Cardiac septum (tissue), 1 donor: ENCODE measurements at regions of chr11 and their contacts with region 1.

Region 1: DNA sequence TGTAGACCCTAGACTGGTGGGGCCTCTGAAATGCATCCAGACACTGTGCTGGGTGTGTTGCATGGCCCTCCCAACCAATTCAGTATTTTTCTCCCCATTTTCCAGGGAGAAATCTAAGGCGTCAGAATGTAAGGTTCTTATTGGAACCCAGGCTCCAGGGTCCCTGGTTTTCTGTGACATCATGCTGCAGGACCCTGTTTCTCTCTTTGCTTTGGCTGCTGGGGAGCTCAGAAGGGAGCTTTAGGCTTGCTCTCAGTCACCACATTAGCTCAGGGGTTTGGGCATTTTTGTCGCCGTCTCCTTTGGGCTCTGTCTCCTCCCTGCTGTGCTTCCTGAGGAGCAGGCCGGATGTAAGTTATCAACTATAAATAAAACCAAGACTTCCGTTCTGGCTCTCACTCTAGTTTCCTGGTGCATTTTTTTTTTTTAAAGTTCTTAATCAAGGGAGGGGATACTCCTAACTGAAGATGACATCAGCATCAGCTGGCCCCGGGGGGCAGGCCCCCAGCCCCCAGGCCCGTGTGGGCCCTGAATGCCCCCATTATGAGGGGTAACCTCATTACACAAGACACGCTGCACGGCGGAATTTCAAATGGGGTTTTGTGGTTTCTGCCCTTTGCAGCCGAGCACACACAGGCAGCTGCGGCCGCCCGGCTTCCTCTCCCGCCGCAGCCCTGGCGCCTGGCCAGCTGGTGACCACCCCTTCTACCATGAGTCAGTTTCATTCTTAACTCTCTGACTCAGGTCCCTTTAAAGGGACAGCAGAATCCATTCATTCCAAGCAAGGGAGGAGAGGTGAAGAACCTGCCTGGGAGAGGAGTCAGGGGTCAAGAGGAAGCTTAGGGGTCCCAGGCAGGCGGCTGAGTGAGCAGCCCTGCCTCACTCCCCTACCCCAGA is 3.2 kb downstream of the MYEOV start:
- DNase-seq: peak; percentile 95

Region 2: GRCh38 chr11:69101115-69101791 is 195.9 kb before region 1 on chr11:
- intact Hi-C with region 1: loop called (anchors 5 kb)
- DNase-seq: no peak

Region 3: GRCh38 chr11:69417146-69418085 is 120.3 kb after region 1 on chr11:
- intact Hi-C with region 1: loop called (anchors 2 kb)
- DNase-seq: no peak

Region 4: GRCh38 chr11:69449320-69450063 is 152.4 kb after region 1 on chr11:
- intact Hi-C with region 1: loop called (anchors 1 kb)
- DNase-seq: peak; percentile 87

Region 5: DNA sequence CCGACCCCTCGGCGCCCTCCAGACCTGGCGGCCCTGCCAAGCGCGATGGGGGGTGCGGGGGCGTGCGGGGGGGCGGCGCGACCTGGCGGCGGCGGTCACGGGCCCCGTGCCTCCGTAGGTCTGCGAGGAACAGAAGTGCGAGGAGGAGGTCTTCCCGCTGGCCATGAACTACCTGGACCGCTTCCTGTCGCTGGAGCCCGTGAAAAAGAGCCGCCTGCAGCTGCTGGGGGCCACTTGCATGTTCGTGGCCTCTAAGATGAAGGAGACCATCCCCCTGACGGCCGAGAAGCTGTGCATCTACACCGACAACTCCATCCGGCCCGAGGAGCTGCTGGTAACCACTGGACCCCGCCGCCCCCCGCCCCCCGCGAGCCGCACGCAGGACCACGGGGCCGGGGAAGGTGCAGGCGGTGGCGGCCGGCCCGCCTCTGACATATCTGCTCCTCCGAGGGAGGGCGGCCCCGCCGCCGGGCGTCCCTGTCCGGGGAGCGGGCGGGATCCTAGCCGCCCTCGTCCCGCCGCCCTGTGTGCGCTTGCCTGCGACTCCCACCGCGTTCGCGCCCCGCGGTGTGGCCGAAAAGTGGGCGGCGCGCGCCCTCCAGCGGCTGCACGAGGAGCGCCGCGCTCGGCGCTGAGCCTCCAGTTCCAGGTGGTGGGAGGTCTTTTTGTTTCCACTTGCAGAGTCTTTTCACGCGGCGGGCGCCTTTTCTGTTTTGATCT is 345.9 kb after region 1 on chr11:
- intact Hi-C with region 1: loop called (anchors 2 kb)
- DNase-seq: peak; percentile 89